ENCODE measurements at regions of chr3 and their contacts with region 1.

Region 1: GRCh38 chr3:179000144-179000543 is 71.5 kb downstream of the ZMAT3 start:
- DNase-seq: no peak
- H3K4me3 Mint-ChIP-seq: no peak overlapping the region
- H3K27ac Mint-ChIP-seq: no peak overlapping the region
- H3K4me1 Mint-ChIP-seq: peaks cover 26% of the 10 kb centered on the region
- H3K27me3 Mint-ChIP-seq: peaks cover 42% of the 10 kb centered on the region

Region 2: DNA sequence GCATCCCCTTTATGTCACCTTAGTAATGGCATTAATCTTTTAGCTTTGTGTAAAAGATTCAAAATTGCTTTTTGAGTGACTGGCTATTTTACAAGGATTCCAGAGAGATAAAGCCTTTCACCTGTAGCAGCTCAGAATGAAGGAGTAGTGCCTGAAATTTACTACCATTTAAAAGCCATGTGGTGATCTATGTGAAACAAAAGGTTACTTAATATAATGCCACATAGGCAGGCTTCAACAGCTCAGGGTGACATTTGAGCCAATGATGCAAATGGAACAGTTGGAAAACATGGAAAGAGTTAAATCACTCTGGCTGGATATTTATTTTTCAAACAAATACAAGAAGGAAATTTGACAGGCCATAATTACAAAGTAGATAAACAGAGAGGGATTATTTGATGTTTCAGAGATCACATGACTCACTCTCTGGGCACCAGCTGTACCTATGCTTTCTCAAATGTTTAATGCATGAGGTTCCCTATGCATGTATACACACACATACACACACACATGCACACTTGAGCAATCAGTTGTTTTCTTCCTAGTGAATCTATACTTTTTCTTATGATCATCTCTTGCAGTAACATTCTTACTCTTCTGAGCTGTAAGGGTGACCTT is 100.0 kb before region 1 on chr3:
- intact Hi-C with region 1: no loop called
- DNase-seq: no peak
- H3K4me3 Mint-ChIP-seq: no peak overlapping the region
- H3K27ac Mint-ChIP-seq: no peak overlapping the region
- H3K4me1 Mint-ChIP-seq: no peaks in the 10 kb centered on the region
- H3K27me3 Mint-ChIP-seq: no peaks in the 10 kb centered on the region

Region 3: DNA sequence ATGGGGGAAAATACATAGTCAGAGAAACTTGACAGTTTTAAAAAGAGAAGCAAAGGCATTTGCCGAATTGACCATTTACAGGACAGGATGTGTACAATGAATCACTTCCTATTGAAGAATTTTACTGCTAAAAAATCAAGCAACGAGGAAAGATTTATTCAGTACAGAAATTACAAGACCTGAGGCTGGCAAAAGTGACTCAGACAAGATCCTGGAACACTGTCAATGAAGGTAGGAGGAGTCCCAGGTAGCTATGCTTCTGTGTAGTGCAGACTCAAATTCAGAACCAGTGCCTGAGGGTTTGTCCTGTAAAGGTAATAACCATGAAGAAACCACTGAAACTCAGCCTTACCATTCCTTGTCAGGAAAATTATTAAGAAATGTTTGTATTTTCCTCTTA is 49.5 kb before region 1 on chr3:
- intact Hi-C with region 1: loop called (anchors 5 kb)
- DNase-seq: no peak
- H3K4me3 Mint-ChIP-seq: no peak overlapping the region
- H3K27ac Mint-ChIP-seq: no peak overlapping the region
- H3K4me1 Mint-ChIP-seq: peaks cover 4% of the 10 kb centered on the region
- H3K27me3 Mint-ChIP-seq: no peaks in the 10 kb centered on the region

Region 4: GRCh38 chr3:178966299-178967176 is 33.6 kb before region 1 on chr3:
- intact Hi-C with region 1: loop called (anchors 5 kb)
- DNase-seq: no peak
- H3K4me3 Mint-ChIP-seq: no peak overlapping the region
- H3K27ac Mint-ChIP-seq: no peak overlapping the region
- H3K4me1 Mint-ChIP-seq: peaks cover 9% of the 10 kb centered on the region
- H3K27me3 Mint-ChIP-seq: peaks cover 8% of the 10 kb centered on the region

Region 5: GRCh38 chr3:178982137-178982536 is 18.0 kb before region 1 on chr3:
- intact Hi-C with region 1: no loop called
- DNase-seq: no peak
- H3K4me3 Mint-ChIP-seq: no peak overlapping the region
- H3K27ac Mint-ChIP-seq: no peak overlapping the region
- H3K4me1 Mint-ChIP-seq: peaks cover 4% of the 10 kb centered on the region
- H3K27me3 Mint-ChIP-seq: no peaks in the 10 kb centered on the region

Region 6: DNA sequence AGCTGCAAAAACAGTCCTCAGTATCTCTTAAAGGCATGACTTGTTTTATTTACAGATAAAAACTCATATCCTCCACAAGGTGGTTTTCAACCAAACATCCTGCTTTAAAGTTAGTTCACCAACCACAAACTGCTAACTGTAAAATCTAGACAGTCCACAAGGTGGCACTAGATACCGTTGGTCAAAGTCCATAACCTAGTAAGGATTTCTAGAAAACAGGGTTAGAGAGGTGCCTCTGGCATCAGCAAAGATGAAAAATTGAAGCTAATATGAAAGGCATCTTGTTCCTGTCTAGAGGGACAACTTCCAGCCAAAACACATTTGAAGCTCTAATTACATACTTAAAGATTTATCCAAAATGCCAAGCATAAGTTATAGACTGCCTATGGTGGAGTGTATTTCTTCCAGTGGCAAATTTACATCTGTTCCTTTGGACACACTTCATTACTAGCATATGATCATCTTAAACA is 15.4 kb after region 1 on chr3:
- intact Hi-C with region 1: loop called (anchors 2 kb)
- DNase-seq: peak; percentile 62
- H3K4me3 Mint-ChIP-seq: no peak overlapping the region
- H3K27ac Mint-ChIP-seq: peak overlapping the region; percentile 2
- H3K4me1 Mint-ChIP-seq: peaks cover 35% of the 10 kb centered on the region
- H3K27me3 Mint-ChIP-seq: peaks cover 17% of the 10 kb centered on the region

Region 7: GRCh38 chr3:179037351-179037750 is 37.2 kb after region 1 on chr3:
- intact Hi-C with region 1: no loop called
- DNase-seq: peak; percentile 40
- H3K4me3 Mint-ChIP-seq: peak overlapping the region; percentile 62
- H3K27ac Mint-ChIP-seq: peak overlapping the region; percentile 17
- H3K4me1 Mint-ChIP-seq: peaks cover 2% of the 10 kb centered on the region
- H3K27me3 Mint-ChIP-seq: no peaks in the 10 kb centered on the region

Region 8: GRCh38 chr3:179174316-179174715 is 174.2 kb after region 1 on chr3:
- intact Hi-C with region 1: no loop called
- DNase-seq: no peak
- H3K4me3 Mint-ChIP-seq: no peak overlapping the region
- H3K27ac Mint-ChIP-seq: no peak overlapping the region
- H3K4me1 Mint-ChIP-seq: peaks cover 17% of the 10 kb centered on the region
- H3K27me3 Mint-ChIP-seq: peaks cover 3% of the 10 kb centered on the region

Measured in activated T-helper 2 cell treated with anti-CD3 and anti-CD28 coated beads, Interferon-gamma antibody, Interleukin-2, Interleukin-4, amounts not matched to agents 10 μg/mL and 5 μg/mL and 100 μg/mL, durations not matched to agents 14 hours and 24 hours and 36 hours (primary cell).